ENCODE measurements at regions of chrX and their contacts with region 1.

Region 1: GRCh38 chrX:53526999-53527398 is 92.8 kb upstream of the HSD17B10 start:
- DNase-seq: no peak
- ATAC-seq: no peak
- H3K4me3 ChIP-seq: no peak overlapping the region
- H3K27ac ChIP-seq: no peak overlapping the region
- H3K4me1 ChIP-seq: no peaks in the 10 kb centered on the region
- H3K27me3 ChIP-seq: peaks cover 0 to 4% (median 0%) of the 10 kb centered on the region in 9 donors
- CTCF ChIP-seq: no peak
- POLR2A ChIP-seq: no peak

Region 2: GRCh38 chrX:53374222-53374820 is 152.7 kb before region 1 on chrX:
- intact Hi-C with region 1: loop called in 1 of 10 experiments (anchors 10 kb)
- DNase-seq: no peak
- ATAC-seq: no peak
- H3K4me3 ChIP-seq: no peak overlapping the region
- H3K27ac ChIP-seq: peak overlapping the region in 1 of 12 donors; percentile 37
- H3K4me1 ChIP-seq: peaks cover 0 to 11% (median 0%) of the 10 kb centered on the region in 12 donors
- H3K27me3 ChIP-seq: no peaks in the 10 kb centered on the region
- CTCF ChIP-seq: no peak
- POLR2A ChIP-seq: no peak